IMR-90 (cell line): ENCODE measurements at regions of chr18 and their contacts with region 1.

Region 1: GRCh38 chr18:5874336-5874735 is 21.0 kb downstream of the TMEM200C start:
- DNase-seq: no peak
- ATAC-seq: no peak
- H3K4me3 ChIP-seq: no peak overlapping the region
- H3K27ac ChIP-seq: no peak overlapping the region
- H3K4me1 ChIP-seq: no peaks in the 10 kb centered on the region
- H3K27me3 ChIP-seq: peaks cover 3% of the 10 kb centered on the region
- CTCF ChIP-seq: no peak
- POLR2A ChIP-seq: no peak
- RAD21 ChIP-seq: no peak

Region 2: DNA sequence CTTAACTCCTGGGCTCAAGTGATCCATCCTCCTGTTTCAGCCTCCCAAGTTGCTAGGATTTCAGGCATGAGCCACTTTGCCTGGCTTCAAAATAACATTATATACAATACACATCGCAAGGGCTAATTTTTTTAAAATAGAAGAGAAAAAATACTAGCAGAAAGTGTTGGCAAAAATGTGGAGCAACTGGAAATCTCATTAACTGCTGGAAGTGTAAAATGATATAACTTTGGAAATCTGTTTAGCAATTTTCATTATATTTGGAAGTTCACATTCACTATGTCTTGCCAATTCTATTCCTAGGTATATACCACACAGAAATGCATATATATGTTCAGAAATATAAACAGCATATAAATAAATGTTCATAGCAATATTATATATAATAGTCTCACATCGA is 523.7 kb before region 1 on chr18:
- CTCF ChIA-PET with region 1: no interaction called
- POLR2A ChIA-PET with region 1: no interaction called
- dilution Hi-C with region 1: no loop called
- in situ Hi-C with region 1: no loop called
- intact Hi-C with region 1: no loop called
- DNase-seq: no peak
- ATAC-seq: no peak
- H3K4me3 ChIP-seq: no peak overlapping the region
- H3K27ac ChIP-seq: no peak overlapping the region
- H3K4me1 ChIP-seq: no peaks in the 10 kb centered on the region
- H3K27me3 ChIP-seq: no peaks in the 10 kb centered on the region
- CTCF ChIP-seq: no peak
- POLR2A ChIP-seq: no peak
- RAD21 ChIP-seq: no peak

Region 3: DNA sequence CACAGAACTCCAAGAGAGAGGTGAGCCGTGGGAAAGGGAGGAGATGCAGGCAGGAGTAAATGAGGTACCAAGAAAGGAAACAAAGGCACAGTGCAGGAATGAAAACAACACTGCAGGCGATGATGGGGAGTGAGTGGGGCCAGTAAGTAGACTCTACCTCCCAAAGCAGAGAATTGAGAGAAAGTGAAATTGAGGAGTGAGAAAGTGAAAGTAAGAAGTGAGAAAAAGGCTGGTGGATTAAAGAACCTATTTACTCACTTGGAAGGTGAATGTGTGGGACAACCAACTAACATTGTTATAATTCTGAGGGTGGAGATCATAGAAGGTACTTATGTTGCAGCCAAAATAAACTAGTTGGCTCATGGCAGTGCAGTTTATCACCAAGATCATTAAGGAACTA is 214.1 kb after region 1 on chr18:
- CTCF ChIA-PET with region 1: no interaction called
- POLR2A ChIA-PET with region 1: no interaction called
- dilution Hi-C with region 1: no loop called
- in situ Hi-C with region 1: no loop called
- intact Hi-C with region 1: no loop called
- DNase-seq: no peak
- ATAC-seq: no peak
- H3K4me3 ChIP-seq: peak overlapping the region; percentile 10; the same call in 1 of the 2 replicates
- H3K27ac ChIP-seq: no peak overlapping the region
- H3K4me1 ChIP-seq: no peaks in the 10 kb centered on the region
- H3K27me3 ChIP-seq: no peaks in the 10 kb centered on the region
- CTCF ChIP-seq: no peak
- POLR2A ChIP-seq: no peak
- RAD21 ChIP-seq: no peak

Region 4: DNA sequence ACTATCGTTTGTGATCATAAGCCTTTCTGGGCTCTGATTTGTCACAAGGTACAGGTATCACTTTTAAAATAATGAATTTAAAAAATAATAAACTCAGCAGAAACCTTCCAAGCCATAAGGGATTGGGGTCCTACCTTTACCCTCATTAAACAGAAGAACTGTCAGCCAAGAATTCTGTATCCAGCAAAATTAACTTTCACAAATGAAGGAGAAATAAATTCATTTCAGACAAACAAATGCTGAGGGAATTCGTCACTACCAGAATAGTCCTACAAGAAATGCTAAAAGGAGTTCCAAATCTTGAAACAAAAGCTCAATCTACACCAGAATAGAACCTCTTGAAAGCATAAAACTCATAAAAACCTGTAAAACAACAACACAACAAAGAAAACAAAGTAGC is 514.7 kb after region 1 on chr18:
- CTCF ChIA-PET with region 1: no interaction called
- POLR2A ChIA-PET with region 1: no interaction called
- dilution Hi-C with region 1: no loop called
- in situ Hi-C with region 1: no loop called
- intact Hi-C with region 1: no loop called
- DNase-seq: no peak
- ATAC-seq: no peak
- H3K4me3 ChIP-seq: no peak overlapping the region
- H3K27ac ChIP-seq: no peak overlapping the region
- H3K4me1 ChIP-seq: no peaks in the 10 kb centered on the region
- H3K27me3 ChIP-seq: no peaks in the 10 kb centered on the region
- CTCF ChIP-seq: no peak
- POLR2A ChIP-seq: no peak
- RAD21 ChIP-seq: no peak

Region 5: GRCh38 chr18:6482198-6482977 is 608.1 kb after region 1 on chr18:
- CTCF ChIA-PET with region 1: no interaction called
- POLR2A ChIA-PET with region 1: no interaction called
- dilution Hi-C with region 1: no loop called
- in situ Hi-C with region 1: no loop called
- intact Hi-C with region 1: loop called (anchors 1 kb)
- DNase-seq: peak; percentile 67
- ATAC-seq: peak; percentile 98
- H3K4me3 ChIP-seq: no peak overlapping the region
- H3K27ac ChIP-seq: no peak overlapping the region
- H3K4me1 ChIP-seq: no peaks in the 10 kb centered on the region
- H3K27me3 ChIP-seq: peaks cover 2% of the 10 kb centered on the region; the same call in 1 of the 2 replicates
- CTCF ChIP-seq: peak; percentile 54
- POLR2A ChIP-seq: no peak
- RAD21 ChIP-seq: peak; percentile 67